CD8-positive, alpha-beta T cell (primary cell): ENCODE measurements at regions of chr10 and their contacts with region 1.

Region 1: DNA sequence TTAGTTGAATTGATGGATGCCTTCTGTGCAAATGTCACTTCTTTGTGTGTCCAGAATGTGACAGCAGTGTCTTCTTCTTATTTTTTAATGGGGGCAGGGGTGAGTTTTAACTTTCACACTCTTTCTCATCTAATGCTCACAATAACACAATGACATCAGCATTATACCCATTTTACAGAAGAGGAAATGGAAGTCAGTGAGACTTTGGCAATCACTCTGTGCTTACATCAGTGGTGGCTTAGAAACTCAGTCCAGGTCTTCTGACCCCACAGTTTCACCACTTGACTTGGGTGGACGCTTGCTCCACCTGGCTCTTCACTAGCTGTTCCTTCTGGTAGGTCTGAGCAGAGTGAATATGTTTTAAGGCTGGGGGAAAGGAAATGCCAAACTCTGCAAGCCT is 124.0 kb downstream of the PRKCQ start:
- DNase-seq: no peak
- ATAC-seq: no peak
- H3K4me3 ChIP-seq: no peak overlapping the region
- H3K4me3 Mint-ChIP-seq: no peak overlapping the region
- H3K27ac ChIP-seq: no peak overlapping the region
- H3K27ac Mint-ChIP-seq: no peak overlapping the region
- H3K4me1 ChIP-seq: no peaks in the 10 kb centered on the region
- H3K4me1 Mint-ChIP-seq: peaks cover 20% of the 10 kb centered on the region
- H3K27me3 ChIP-seq: no peaks in the 10 kb centered on the region
- H3K27me3 Mint-ChIP-seq: no peaks in the 10 kb centered on the region
- CTCF ChIP-seq: no peak

Region 2: GRCh38 chr10:6445501-6446316 is 10.4 kb before region 1 on chr10:
- CTCF ChIA-PET with region 1: interaction called, 10 read pairs
- POLR2A ChIA-PET with region 1: no interaction called
- intact Hi-C with region 1: no loop called
- DNase-seq: peak; percentile 36 to 76 (median 64)
- ATAC-seq: peak; percentile 58
- H3K4me3 ChIP-seq: no peak overlapping the region
- H3K4me3 Mint-ChIP-seq: no peak overlapping the region
- H3K27ac ChIP-seq: peak overlapping the region in 1 of 2 experiments; percentile 47
- H3K27ac Mint-ChIP-seq: peak overlapping the region; percentile 83
- H3K4me1 ChIP-seq: peaks cover 8% of the 10 kb centered on the region
- H3K4me1 Mint-ChIP-seq: peaks cover 22% of the 10 kb centered on the region
- H3K27me3 ChIP-seq: no peaks in the 10 kb centered on the region
- H3K27me3 Mint-ChIP-seq: no peaks in the 10 kb centered on the region
- CTCF ChIP-seq: peak; percentile 73